ENCODE measurements at regions of chr11 and their contacts with region 1.

Region 1: DNA sequence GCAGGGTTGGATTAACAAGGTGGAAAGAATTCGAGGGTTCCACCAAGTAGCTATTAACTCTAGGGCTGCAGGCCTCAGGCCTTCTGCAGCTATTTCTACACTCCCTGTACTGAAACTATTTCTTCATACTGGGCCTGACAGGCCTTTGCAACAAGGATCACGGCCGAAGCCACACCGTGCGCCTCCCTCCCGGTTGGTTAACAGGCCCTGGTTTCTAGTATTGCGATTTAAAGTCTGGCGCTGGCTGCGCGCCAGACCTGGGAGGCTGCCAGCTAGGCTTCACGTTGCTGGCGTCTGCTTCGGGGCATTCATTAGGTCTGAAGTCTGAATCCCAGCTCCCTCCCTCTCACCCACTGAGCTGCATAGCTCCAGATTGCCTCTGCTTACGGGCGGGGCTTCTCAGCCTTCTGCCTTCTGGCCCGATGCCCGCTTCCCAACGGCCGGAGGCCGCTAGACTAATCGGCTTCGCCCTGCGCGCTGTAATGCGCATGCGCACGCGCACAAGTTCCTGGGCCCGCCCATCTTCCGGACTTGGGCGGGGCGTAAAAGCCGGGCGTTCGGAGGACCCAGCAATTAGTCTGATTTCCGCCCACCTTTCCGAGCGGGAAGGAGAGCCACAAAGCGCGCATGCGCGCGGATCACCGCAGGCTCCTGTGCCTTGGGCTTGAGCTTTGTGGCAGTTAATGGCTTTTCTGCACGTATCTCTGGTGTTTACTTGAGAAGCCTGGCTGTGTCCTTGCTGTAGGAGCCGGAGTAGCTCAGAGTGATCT is 1.6 kb downstream of the LDHA start:
- DNase-seq: peak; percentile 98
- ATAC-seq: peak; percentile 78
- H3K4me3 ChIP-seq: peak overlapping the region; percentile 72 to 96 (median 92)
- H3K4me3 Mint-ChIP-seq: peak overlapping the region; percentile 98
- H3K27ac ChIP-seq: peak overlapping the region; percentile 48 to 71
- H3K27ac Mint-ChIP-seq: peak overlapping the region; percentile 94
- H3K4me1 ChIP-seq: peaks cover 11 to 15% of the 10 kb centered on the region in 2 donors
- H3K4me1 Mint-ChIP-seq: peaks cover 28% of the 10 kb centered on the region
- H3K27me3 ChIP-seq: no peaks in the 10 kb centered on the region
- H3K27me3 Mint-ChIP-seq: no peaks in the 10 kb centered on the region
- CTCF ChIP-seq: no peak

Region 2: DNA sequence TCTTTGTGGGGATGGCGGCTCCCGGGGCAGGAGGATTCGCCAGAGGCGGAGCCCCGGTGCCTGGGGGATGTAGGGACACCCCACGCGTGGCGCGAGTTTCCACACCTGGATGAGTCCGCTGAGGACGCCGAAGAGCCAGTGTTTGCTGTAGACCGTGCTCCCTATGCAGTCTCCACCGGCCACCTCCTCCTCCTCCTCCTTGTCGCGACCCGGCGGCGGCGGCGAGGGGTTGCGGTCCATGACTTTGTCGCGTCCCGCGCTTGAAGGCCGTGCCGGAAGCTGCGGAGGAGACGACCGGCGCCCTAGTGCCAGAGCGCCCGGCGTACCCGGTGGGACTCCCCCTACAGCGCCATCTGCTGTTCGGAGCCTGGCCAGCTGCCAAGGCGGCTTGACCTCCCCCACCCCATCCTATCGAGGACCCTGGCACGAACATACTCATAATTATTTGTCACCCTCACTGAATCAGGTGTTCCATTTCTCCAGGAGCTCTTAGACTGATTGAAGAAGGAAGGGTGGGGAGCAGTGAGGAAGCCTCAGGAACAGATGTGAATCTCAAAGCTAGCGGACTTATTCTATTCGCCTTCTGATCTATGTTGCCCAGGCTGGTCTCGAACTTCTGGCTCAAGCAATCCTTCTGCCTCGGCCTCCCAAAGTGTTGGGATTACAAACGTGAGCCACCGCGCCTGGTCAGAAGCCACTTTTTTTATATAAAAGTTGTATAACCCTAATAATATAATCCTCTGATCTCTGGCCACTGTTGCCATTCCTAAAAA is 289.9 kb before region 1 on chr11 and contains the start of gene SAAL1:
- CTCF ChIA-PET with region 1: interaction called, 3 read pairs
- POLR2A ChIA-PET with region 1: no interaction called
- intact Hi-C with region 1: loop called (anchors 1 kb)
- DNase-seq: peak; percentile 91
- ATAC-seq: peak; percentile 98
- H3K4me3 ChIP-seq: peak within 1 kb of the TSS; percentile 70 to 99 (median 82)
- H3K4me3 Mint-ChIP-seq: peak within 1 kb of the TSS; percentile 95
- H3K27ac ChIP-seq: peak within 1 kb of the TSS; percentile 65 to 91
- H3K27ac Mint-ChIP-seq: peak within 1 kb of the TSS; percentile 90
- H3K4me1 ChIP-seq: peaks cover 15 to 17% of the 10 kb centered on the region in 2 donors
- H3K4me1 Mint-ChIP-seq: peaks cover 28% of the 10 kb centered on the region
- H3K27me3 ChIP-seq: peaks cover 0 to 4% (median 1%) of the 10 kb centered on the region in 4 experiments
- H3K27me3 Mint-ChIP-seq: peaks cover 19% of the 10 kb centered on the region
- CTCF ChIP-seq: peak; percentile 89
- total RNA-seq, gene SAAL1: 35.2 and 37.8 TPM in 2 replicates

Region 3: DNA sequence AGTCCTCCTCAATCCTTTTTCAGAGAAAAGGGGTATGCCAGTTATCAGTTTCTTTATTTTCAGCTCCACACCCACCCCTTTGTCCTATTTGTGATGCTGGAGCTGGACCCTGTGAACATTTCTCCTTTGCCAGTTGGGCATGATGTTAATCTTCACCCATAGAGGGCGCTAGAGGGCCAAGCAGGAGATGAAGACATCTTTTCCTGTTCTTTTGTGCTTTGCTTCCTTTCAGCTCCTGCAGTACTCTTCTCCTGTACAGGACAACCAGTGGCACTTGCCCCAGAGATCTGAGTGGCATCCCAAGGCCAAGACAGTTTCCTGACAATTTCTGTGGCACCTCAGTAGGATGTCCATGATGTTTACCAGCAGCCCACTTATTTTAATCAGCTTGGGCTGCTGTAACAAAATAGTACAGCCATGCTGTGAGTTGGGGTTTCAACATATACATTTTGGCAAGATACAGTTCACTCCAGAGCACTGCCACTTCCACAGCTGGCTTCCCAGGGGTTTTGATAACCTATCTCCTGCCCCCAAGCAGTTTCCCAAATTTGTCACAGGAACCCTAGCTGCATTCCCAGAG is 152.0 kb before region 1 on chr11:
- CTCF ChIA-PET with region 1: interaction called, 15 read pairs
- POLR2A ChIA-PET with region 1: no interaction called
- intact Hi-C with region 1: loop called (anchors 2 kb)
- DNase-seq: peak; percentile 77
- ATAC-seq: no peak
- H3K4me3 ChIP-seq: no peak overlapping the region
- H3K4me3 Mint-ChIP-seq: no peak overlapping the region
- H3K27ac ChIP-seq: no peak overlapping the region
- H3K27ac Mint-ChIP-seq: peak overlapping the region; percentile 12
- H3K4me1 ChIP-seq: peaks cover 2 to 19% of the 10 kb centered on the region in 2 donors
- H3K4me1 Mint-ChIP-seq: peaks cover 15% of the 10 kb centered on the region
- H3K27me3 ChIP-seq: peaks cover 0 to 7% (median 6%) of the 10 kb centered on the region in 4 experiments
- H3K27me3 Mint-ChIP-seq: peaks cover 14% of the 10 kb centered on the region
- CTCF ChIP-seq: peak; percentile 90

Region 4: DNA sequence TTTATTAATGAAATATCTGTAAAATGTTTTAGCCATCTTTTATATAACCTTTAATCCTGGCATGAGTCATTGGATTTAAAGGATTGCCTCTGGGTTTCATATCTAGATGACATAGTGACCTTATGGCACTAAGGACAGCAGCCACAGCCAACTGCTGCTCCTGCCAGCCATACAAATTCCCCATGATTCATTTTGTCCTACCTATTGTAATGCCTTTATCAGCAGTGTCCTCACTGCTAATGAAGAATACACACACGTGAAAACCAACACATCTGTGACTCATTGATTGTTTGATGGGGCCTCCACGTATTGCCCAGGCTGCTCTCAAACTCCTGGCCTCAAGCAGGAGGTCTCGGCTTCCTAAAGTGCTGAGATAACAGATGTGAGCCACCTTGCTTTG is 61.5 kb after region 1 on chr11:
- CTCF ChIA-PET with region 1: no interaction called
- POLR2A ChIA-PET with region 1: no interaction called
- intact Hi-C with region 1: no loop called
- DNase-seq: no peak
- ATAC-seq: no peak
- H3K4me3 ChIP-seq: no peak overlapping the region
- H3K4me3 Mint-ChIP-seq: no peak overlapping the region
- H3K27ac ChIP-seq: no peak overlapping the region
- H3K27ac Mint-ChIP-seq: no peak overlapping the region
- H3K4me1 ChIP-seq: no peaks in the 10 kb centered on the region
- H3K4me1 Mint-ChIP-seq: no peaks in the 10 kb centered on the region
- H3K27me3 ChIP-seq: no peaks in the 10 kb centered on the region
- H3K27me3 Mint-ChIP-seq: peaks cover 12% of the 10 kb centered on the region
- CTCF ChIP-seq: no peak

Region 5: DNA sequence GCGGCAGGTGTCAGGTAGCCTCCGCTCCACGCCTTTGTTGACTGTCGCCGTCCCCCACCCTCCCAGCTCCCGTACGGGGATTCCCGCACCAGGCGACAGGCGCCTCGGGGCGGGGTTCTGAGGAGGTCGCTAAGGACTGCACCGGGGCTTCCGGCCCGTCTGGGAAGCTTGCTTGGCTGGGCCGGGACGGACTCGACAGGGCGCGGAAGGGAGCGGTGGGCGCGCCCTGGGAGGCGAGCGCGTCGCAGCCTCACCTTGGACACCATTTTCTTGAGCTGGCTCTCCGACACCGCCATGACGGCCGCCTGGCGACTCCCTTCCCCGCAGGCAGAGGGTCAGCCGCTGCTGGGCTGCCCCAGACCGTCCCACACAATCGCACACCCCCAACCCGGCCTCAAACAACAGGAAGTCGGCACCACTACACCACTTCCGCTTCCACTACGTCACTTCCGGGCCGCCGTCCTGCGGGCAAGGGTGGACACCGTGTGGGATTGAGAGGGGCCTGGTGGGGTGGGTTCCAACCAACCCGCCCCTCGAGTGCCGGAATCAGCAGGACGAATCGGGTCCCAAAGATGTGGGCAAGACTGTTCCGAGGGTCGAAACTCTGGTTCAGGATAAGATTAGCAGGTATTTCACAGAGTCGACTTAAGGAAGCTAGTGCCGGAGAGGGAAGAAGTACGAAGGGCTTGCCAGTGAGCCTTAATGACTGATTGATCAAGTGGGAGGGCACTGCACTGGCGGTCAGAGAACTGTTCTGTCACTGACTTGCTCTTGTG is 130.8 kb after region 1 on chr11 and contains the start of gene TSG101:
- CTCF ChIA-PET with region 1: no interaction called
- POLR2A ChIA-PET with region 1: interaction called, 10 read pairs
- intact Hi-C with region 1: loop called (anchors 1 kb)
- DNase-seq: peak; percentile 98
- ATAC-seq: peak; percentile 82
- H3K4me3 ChIP-seq: peak within 1 kb of the TSS; percentile 82 to 94 (median 84)
- H3K4me3 Mint-ChIP-seq: peak within 1 kb of the TSS; percentile 100
- H3K27ac ChIP-seq: peak within 1 kb of the TSS; percentile 97 to 99
- H3K27ac Mint-ChIP-seq: peak within 1 kb of the TSS; percentile 99
- H3K4me1 ChIP-seq: peaks cover 14% of the 10 kb centered on the region in 2 donors
- H3K4me1 Mint-ChIP-seq: peaks cover 45% of the 10 kb centered on the region
- H3K27me3 ChIP-seq: no peaks in the 10 kb centered on the region
- H3K27me3 Mint-ChIP-seq: no peaks in the 10 kb centered on the region
- CTCF ChIP-seq: no peak
- total RNA-seq, gene TSG101: 49.6 and 50.9 TPM in 2 replicates

Region 6: GRCh38 chr11:18721561-18722292 is 325.8 kb after region 1 on chr11:
- CTCF ChIA-PET with region 1: interaction called, 4 read pairs
- POLR2A ChIA-PET with region 1: no interaction called
- intact Hi-C with region 1: loop called (anchors 10 kb)
- DNase-seq: peak; percentile 77
- ATAC-seq: peak; percentile 66
- H3K4me3 ChIP-seq: peak overlapping the region; percentile 24 to 80 (median 69)
- H3K4me3 Mint-ChIP-seq: peak overlapping the region; percentile 92
- H3K27ac ChIP-seq: peak overlapping the region in 1 of 2 donors; percentile 11
- H3K27ac Mint-ChIP-seq: peak overlapping the region; percentile 42
- H3K4me1 ChIP-seq: peaks cover 9 to 17% of the 10 kb centered on the region in 2 donors
- H3K4me1 Mint-ChIP-seq: peaks cover 9% of the 10 kb centered on the region
- H3K27me3 ChIP-seq: no peaks in the 10 kb centered on the region
- H3K27me3 Mint-ChIP-seq: peaks cover 6% of the 10 kb centered on the region
- CTCF ChIP-seq: peak; percentile 88

Measured in B cell (primary cell).